Breast epithelium (tissue), 4 donors: ENCODE measurements at regions of chr2 and their contacts with region 1.

Region 1: DNA sequence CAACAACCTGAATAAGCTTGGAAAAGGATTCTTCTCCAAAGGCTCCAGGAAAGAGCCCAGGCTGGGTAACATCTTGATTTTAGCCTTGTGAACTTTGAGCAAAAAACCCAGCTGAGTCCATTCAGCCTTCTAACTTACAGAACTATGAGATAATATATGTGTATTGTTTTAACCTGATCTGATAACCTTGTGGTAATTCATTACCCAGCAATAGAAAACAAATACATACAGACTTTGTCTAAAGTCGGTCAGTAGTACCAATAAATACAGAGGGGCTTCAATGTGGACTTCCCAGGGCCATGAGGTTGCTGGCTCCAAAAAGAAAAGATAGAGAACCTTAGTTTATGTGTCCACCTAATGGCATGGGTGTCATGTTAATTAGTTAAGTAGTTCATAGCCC is 191.8 kb downstream of the KCNH7 start:
- DNase-seq: no peak
- H3K4me3 ChIP-seq: no peak overlapping the region
- H3K27ac ChIP-seq: no peak overlapping the region
- H3K4me1 ChIP-seq: no peaks in the 10 kb centered on the region
- H3K27me3 ChIP-seq: no peaks in the 10 kb centered on the region
- CTCF ChIP-seq: no peak
- POLR2A ChIP-seq: no peak

Region 2: DNA sequence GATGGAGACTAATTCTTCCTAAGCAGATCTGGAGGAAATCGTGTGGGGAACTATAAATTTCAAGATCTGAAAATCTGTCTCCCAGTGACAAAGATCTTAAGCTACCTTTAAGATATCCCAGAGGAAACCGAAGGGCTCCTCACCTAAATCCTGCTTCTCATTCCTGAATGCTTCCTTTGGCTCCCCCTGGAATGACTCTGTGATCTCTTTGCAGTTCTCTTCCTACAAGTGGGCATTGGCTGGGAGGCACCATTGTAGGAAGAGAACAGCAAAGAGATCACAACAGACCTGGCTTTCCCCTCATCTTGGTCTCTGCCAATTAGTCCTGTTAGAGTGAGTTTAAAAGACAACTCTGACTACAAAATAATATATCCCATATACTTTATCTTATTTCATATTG is 261.8 kb after region 1 on chr2:
- intact Hi-C with region 1: loop called (anchors 5 kb)
- DNase-seq: no peak
- H3K4me3 ChIP-seq: no peak overlapping the region
- H3K27ac ChIP-seq: no peak overlapping the region
- H3K4me1 ChIP-seq: no peaks in the 10 kb centered on the region
- H3K27me3 ChIP-seq: no peaks in the 10 kb centered on the region
- CTCF ChIP-seq: no peak
- POLR2A ChIP-seq: no peak